ENCODE measurements at regions of chr15 and their contacts with region 1.

Region 1: GRCh38 chr15:83248151-83249029 is 36.1 kb downstream of the BNC1 start:
- DNase-seq: no peak
- H3K4me3 ChIP-seq: no peak overlapping the region
- H3K27ac ChIP-seq: no peak overlapping the region
- H3K4me1 ChIP-seq: no peaks in the 10 kb centered on the region
- H3K27me3 ChIP-seq: peaks cover 87% of the 10 kb centered on the region
- CTCF ChIP-seq: peak; percentile 97

Region 2: DNA sequence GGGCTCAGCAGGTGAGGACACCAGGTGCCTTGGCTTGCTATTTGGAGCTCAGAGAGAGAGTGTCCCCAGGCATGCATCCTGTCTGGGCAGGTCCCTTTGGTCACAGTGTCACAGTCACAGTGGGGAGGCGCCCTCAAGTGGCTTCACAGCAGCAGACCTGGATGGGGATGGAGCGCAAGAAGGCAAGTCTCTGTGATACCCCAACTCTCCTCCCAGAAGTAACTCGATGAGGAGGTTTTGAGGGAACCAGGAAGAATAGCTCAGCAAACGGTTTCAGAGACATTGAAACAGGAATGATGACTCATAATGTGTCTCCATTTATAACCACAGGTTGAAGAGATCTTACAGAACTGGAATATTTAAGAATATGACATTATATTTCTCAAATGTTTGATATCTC is 132.3 kb after region 1 on chr15:
- intact Hi-C with region 1: loop called (anchors 5 kb)
- DNase-seq: peak; percentile 25
- H3K4me3 ChIP-seq: no peak overlapping the region
- H3K27ac ChIP-seq: no peak overlapping the region
- H3K4me1 ChIP-seq: peaks cover 10% of the 10 kb centered on the region
- H3K27me3 ChIP-seq: peaks cover 82% of the 10 kb centered on the region
- CTCF ChIP-seq: peak; percentile 56

Region 3: DNA sequence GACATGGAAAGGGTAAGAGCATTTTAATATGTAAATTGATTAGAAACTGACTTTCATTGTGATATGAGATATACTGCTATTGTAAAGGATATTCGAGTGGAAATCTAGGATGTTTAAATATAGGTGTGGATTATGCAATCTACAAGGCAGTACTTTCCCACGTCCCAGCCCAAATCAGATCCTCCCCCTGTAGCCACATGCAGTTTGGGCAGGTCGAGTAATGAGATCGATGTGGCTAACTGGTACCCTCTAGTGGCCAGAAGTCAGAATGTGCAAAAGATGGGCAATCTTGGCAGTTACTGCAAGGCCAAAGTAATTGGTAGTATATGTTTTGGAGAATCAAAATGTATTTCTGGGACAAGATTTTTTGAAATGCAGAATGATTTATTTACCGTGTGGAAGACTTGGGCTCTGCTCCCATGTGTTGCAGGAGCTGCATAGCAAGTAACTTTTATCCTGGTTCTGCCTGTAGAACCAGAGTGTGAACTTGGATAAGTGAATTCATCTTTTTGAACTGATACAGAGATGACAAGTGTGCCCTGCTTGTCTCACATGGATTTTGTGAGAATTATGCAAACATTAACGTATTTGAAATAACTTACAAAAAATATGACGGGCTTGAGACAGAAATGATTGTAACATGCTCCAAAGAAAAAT is 311.0 kb after region 1 on chr15:
- intact Hi-C with region 1: loop called (anchors 2 kb)
- DNase-seq: no peak
- H3K4me3 ChIP-seq: no peak overlapping the region
- H3K27ac ChIP-seq: no peak overlapping the region
- H3K4me1 ChIP-seq: no peaks in the 10 kb centered on the region
- H3K27me3 ChIP-seq: peaks cover 14% of the 10 kb centered on the region
- CTCF ChIP-seq: peak; percentile 84

Measured in left ventricle myocardium inferior (tissue), 1 donor.